Activated naive CD4-positive, alpha-beta T cell treated with anti-CD3 and anti-CD28 coated beads for 36 hours (primary cell): ENCODE measurements at regions of chr3 and their contacts with region 1.

Region 1: GRCh38 chr3:14921078-14921616 is 26.2 kb upstream of the NR2C2 start:
- DNase-seq: peak; percentile 88
- H3K4me3 Mint-ChIP-seq: no peak overlapping the region
- H3K27ac Mint-ChIP-seq: no peak overlapping the region
- H3K4me1 Mint-ChIP-seq: no peaks in the 10 kb centered on the region
- H3K27me3 Mint-ChIP-seq: no peaks in the 10 kb centered on the region

Region 2: GRCh38 chr3:14210843-14211594 is 710.1 kb before region 1 on chr3:
- CTCF ChIA-PET with region 1: no interaction called
- intact Hi-C with region 1: no loop called
- DNase-seq: no peak
- H3K4me3 Mint-ChIP-seq: no peak overlapping the region
- H3K27ac Mint-ChIP-seq: no peak overlapping the region
- H3K4me1 Mint-ChIP-seq: no peaks in the 10 kb centered on the region
- H3K27me3 Mint-ChIP-seq: no peaks in the 10 kb centered on the region

Region 3: DNA sequence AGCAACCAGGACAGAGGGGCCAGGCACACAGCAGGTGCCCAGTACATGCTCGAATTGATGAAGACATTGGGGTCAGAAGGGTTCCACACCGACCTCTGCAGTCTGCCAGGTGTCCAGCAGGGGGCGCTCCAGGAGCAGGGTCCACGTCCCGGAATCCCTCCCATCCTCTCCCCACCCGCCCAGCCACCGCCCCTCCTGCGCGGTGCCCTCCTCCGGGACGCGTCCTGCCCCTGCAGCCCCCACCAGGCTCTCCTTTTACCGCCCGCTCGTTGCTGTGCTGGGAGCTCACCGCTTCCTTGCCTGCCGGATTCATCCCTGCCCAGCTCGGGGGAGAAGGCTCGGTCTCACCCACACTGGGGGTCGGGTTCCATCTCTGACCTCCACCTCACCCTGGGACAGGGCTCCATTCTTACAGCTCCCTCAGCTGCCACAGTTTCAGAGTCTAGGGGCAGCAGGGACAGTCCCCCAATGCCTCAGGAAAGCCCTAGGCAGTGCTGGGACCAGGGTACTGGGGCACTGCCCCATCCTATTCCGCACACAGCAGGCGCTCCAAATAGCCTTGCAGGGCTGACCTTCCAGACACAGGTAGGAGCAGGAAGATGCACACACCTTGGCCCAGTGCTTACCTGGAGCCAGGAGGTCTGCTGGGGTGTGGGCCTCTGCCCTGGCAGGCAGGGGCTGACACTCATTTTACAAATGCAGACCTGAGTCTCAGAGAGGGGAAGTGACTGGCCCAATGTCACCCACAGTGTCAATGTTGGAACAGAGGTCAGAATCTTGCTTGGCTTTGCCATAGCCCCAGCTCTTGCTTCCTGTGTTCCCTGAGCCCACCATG is 412.0 kb before region 1 on chr3:
- CTCF ChIA-PET with region 1: interaction called, 8 read pairs
- intact Hi-C with region 1: loop called (anchors 1 kb)
- DNase-seq: peak; percentile 82
- H3K4me3 Mint-ChIP-seq: no peak overlapping the region
- H3K27ac Mint-ChIP-seq: no peak overlapping the region
- H3K4me1 Mint-ChIP-seq: peaks cover 5% of the 10 kb centered on the region
- H3K27me3 Mint-ChIP-seq: no peaks in the 10 kb centered on the region

Region 4: DNA sequence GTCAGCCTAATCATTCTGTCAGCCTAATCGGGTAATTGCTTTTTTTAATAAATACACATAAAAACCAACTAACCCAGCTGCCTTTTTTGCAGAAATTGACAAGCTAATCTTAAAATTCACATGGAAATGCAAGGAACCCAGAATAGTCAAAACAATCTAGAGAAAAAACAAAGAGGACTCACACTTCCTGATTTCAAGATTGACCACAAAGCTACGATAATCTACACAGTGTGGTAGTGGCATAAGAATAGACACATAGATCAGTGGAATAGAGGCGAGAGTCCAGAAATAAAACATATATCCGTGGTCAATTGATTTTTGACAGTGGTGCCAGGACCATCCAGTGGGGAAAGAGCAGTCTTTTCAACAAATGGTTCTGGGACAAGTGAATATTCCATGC is 248.6 kb before region 1 on chr3:
- CTCF ChIA-PET with region 1: interaction called, 12 read pairs
- intact Hi-C with region 1: loop called (anchors 2 kb)
- DNase-seq: no peak
- H3K4me3 Mint-ChIP-seq: no peak overlapping the region
- H3K27ac Mint-ChIP-seq: no peak overlapping the region
- H3K4me1 Mint-ChIP-seq: no peaks in the 10 kb centered on the region
- H3K27me3 Mint-ChIP-seq: no peaks in the 10 kb centered on the region

Region 5: DNA sequence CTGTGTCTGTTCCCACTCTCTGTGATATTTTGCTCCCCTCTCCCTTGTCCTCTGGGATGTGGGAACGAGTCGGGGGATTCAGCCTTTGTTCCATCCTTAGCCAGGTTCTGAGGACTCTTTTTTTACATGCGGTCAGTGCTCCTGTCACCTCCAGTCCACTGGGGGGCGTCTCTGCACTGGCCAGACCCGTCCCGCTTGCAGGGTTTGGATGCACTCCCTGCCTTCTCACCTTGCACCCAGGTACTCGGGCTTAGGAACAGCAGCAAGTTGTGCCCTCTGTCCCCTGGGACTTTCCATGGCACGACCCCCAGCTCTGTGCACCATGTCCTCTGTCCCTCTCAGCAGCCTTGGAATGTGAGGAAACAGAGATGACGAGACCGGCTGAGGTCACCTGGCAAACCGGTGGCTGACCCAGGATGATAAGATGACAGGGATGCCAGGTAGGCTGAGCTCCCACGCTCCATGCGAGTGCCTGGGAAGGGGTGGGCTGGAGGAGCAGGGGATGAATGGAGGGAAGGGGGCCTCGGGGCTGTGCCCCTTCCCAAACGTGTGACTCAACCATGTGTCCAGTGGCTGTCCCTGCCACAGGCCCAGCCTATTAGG is 129.7 kb before region 1 on chr3:
- CTCF ChIA-PET with region 1: interaction called, 16 read pairs
- intact Hi-C with region 1: loop called (anchors 1 kb)
- DNase-seq: peak; percentile 79
- H3K4me3 Mint-ChIP-seq: no peak overlapping the region
- H3K27ac Mint-ChIP-seq: no peak overlapping the region
- H3K4me1 Mint-ChIP-seq: no peaks in the 10 kb centered on the region
- H3K27me3 Mint-ChIP-seq: peaks cover 9% of the 10 kb centered on the region

Region 6: DNA sequence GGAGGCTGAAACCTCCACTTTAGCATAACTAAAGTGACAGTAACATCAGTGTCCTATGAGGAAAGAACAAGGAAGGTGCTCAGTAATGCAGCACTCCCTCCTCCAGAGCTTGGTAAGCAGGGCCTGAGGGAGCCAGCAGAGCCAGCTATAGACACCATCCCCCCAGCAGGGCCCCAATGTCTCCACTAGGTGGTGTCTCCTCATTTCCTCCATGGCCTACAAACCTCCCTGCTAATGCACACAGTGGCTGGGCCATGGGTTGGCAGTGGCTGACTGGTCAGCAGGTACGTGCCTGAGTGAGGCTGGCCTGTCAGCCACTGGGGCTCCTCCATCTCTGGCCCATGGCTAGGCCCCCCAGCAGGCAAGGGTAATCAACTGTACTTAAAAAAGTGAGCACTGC is 130.4 kb after region 1 on chr3:
- CTCF ChIA-PET with region 1: interaction called, 6 read pairs
- intact Hi-C with region 1: loop called (anchors 1 kb)
- DNase-seq: peak; percentile 64
- H3K4me3 Mint-ChIP-seq: no peak overlapping the region
- H3K27ac Mint-ChIP-seq: peak overlapping the region; percentile 65
- H3K4me1 Mint-ChIP-seq: peaks cover 36% of the 10 kb centered on the region
- H3K27me3 Mint-ChIP-seq: no peaks in the 10 kb centered on the region

Region 7: DNA sequence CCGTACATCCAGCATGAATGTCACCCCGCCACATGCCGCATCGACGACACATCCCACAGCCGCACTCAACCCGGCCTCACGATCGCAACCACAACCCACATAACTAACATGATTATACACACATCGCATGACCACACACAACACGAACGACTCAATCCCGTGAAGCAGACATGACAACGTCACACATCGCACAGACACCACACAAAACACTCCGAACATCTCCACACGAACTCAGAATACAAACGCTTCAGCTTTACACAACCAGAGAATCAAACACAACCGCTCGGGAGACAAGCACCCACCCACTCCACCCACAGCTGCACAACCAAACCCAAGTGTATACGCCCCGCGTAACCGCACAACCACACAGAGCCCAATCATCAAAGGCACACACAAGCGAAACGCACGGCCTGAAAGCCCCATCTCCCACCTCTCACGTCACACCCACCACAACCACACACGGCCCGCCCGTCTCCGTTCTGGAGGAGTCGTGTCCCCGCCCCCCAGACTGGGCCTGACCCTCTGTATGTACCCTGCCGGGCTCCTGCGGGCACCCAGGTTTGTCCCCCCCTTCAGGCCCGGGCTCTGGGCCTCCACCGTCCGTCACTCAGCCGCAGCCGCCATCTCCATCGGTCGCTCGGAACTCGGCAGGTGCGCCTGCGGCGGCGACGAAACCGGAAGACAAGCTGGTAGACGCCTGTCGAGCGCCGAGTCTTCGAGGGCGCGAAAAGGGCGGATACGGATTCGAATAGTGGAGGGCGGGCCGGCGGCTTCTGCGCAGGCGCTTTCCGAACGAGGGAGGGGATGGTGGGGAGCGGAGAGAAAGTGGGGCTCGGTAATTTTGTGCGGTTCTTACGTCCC is 177.6 kb after region 1 on chr3 and contains the start of gene RBSN:
- CTCF ChIA-PET with region 1: no interaction called
- intact Hi-C with region 1: loop called (anchors 1 kb)
- DNase-seq: peak; percentile 97
- H3K4me3 Mint-ChIP-seq: peak within 1 kb of the TSS; percentile 90
- H3K27ac Mint-ChIP-seq: peak within 1 kb of the TSS; percentile 83
- H3K4me1 Mint-ChIP-seq: peaks cover 10% of the 10 kb centered on the region
- H3K27me3 Mint-ChIP-seq: no peaks in the 10 kb centered on the region
- total RNA-seq, gene RBSN: 15.3 to 15.8 TPM